ENCODE measurements at regions of chr1 and their contacts with region 1.

Region 1: GRCh38 chr1:7646981-7647901 is 123.9 kb upstream of the VAMP3 start:
- DNase-seq: peak; percentile 54 to 82 (median 62)
- ATAC-seq: peak in 1 of 4 donors; percentile 29
- H3K4me3 ChIP-seq: no peak overlapping the region
- H3K27ac ChIP-seq: no peak overlapping the region
- H3K4me1 ChIP-seq: peaks cover 0 to 27% (median 8%) of the 10 kb centered on the region in 12 donors
- H3K27me3 ChIP-seq: peaks cover 0 to 3% (median 0%) of the 10 kb centered on the region in 9 donors
- CTCF ChIP-seq: peak; percentile 85 to 98 (median 94)
- POLR2A ChIP-seq: no peak

Region 2: DNA sequence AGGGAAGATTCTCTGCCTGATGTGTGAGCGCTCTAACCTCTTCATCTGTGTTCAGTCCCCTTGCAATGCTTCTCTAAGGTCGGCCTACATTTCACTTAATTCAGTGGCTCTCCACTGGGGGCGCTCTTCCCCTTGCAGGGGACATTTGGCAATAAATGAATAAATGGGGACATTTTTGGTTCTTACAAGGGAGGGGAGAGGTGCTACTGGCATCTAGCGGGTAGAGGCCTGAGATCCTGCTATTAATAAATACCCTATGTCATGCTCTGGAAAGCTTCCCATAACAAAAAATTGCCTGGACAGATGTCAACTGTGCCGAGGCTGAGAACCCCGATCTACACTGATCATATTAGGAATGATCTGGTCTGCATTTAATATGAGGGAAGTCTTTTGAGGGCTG is 919.7 kb before region 1 on chr1:
- intact Hi-C with region 1: loop called in 7 of 10 experiments (anchors 5 to 10 kb)
- DNase-seq: peak in 4 of 5 donors; percentile 38 to 58 (median 43)
- ATAC-seq: peak in 3 of 4 donors; percentile 48 to 64 (median 54)
- H3K4me3 ChIP-seq: no peak overlapping the region
- H3K27ac ChIP-seq: no peak overlapping the region
- H3K4me1 ChIP-seq: peaks cover 0 to 9% (median 0%) of the 10 kb centered on the region in 12 donors
- H3K27me3 ChIP-seq: no peaks in the 10 kb centered on the region
- CTCF ChIP-seq: peak; percentile 68 to 89 (median 86)
- POLR2A ChIP-seq: no peak

Region 3: DNA sequence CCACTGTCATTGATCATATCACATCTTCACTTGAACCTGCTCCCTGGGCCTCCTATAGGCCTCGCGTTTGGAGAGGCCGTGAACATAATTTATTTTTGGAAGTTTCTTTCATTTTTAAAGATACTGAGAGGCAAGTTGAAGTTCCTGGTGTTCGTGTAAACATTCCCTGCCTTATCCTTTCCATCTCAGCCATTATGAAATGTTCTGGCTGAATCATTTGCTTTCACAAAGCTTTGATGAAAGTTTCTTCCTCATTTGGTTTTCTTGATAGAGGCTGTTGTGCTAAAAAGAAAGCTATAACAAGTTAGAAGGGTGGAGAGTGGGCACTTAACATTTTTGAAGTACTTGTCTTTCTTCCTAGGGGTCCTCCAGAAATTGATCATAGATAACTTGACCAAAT is 846.5 kb before region 1 on chr1:
- intact Hi-C with region 1: loop called in 3 of 10 experiments (anchors 10 kb)
- DNase-seq: no peak
- ATAC-seq: no peak
- H3K4me3 ChIP-seq: no peak overlapping the region
- H3K27ac ChIP-seq: peak overlapping the region in 11 of 12 donors; percentile 19 to 71 (median 53)
- H3K4me1 ChIP-seq: peaks cover 6 to 73% (median 53%) of the 10 kb centered on the region in 12 donors
- H3K27me3 ChIP-seq: no peaks in the 10 kb centered on the region
- CTCF ChIP-seq: no peak
- POLR2A ChIP-seq: no peak

Region 4: DNA sequence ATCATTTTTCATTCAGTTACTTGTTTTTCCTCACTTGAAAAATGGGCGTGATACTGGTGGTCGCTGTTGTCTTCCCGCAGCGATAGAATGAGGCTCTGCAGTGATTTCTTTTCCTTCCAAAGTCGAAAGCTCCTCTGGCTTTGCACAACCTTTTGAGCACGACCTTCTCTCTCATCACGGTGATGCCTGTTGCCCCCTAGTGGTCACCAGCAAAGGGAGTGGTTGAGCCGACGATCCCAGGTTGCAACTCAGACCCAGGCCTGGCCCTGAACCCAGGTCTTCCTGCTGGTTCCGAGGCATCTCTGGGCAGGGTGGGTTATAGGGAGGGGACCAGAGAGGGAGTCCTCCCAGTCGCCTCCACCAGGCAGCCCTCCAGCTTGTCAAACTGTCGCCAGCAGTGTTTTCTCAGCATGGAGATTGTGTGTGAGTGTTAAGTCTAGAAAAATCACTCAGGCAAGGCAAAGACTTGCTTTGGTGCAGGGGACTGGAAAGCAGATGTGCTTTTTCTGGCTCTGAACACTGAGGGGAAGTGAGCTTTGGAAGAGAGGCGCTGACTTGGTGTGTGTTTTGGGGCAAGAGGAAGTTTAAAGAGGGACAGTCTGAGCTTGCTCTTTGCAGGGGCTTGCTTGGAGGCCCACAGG is 576.7 kb before region 1 on chr1:
- intact Hi-C with region 1: loop called in 2 of 10 experiments (anchors 10 kb)
- DNase-seq: peak in 4 of 5 donors; percentile 55 to 64 (median 62)
- ATAC-seq: peak in 3 of 4 donors; percentile 74 to 90 (median 78)
- H3K4me3 ChIP-seq: peak overlapping the region in 11 of 12 donors; percentile 7 to 54 (median 33)
- H3K27ac ChIP-seq: no peak overlapping the region
- H3K4me1 ChIP-seq: peaks cover 0 to 7% (median 5%) of the 10 kb centered on the region in 12 donors
- H3K27me3 ChIP-seq: peaks cover 0 to 5% (median 0%) of the 10 kb centered on the region in 9 donors
- CTCF ChIP-seq: peak; percentile 68 to 90 (median 80)
- POLR2A ChIP-seq: no peak

Region 5: DNA sequence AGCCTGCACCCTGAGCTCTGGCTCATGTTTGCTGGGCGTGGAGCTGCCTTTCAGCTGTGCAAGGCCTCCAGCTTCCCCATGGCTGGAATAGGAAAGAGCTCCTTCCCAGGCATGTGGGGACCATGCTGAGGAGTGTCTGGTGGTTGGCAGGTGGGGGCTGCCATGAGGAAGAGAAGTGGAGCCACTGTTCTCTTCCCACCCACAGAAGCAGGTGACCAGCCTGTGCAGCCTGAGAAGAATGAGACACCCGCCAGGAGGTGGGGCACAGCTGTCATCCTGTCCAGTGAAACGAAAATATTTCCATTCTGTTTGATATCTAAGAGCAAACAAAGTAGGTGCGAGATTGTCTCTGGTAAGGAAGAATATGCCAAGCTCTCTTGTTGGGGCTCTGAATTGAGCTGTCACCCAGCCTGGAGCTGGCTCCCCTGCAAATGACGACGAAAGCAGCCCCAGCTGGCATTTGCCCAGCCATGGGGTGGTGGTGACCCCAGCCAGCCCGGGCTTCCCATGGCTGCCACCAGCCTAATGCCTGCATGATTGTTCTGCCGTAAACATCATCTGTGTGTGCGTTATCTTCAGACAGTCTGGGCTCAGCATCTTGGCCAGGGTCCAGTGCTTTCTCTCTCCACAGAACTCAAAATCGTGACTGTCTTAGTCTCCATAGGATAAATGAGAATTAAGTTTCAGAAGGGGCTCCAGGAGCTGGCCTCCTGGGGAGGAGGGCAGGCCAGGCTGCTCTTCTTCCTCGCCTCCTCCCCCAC is 305.9 kb before region 1 on chr1:
- intact Hi-C with region 1: loop called in 1 of 10 experiments (anchors 5 kb)
- DNase-seq: peak in 3 of 5 donors; percentile 18 to 33 (median 27)
- ATAC-seq: peak; percentile 61 to 86 (median 66)
- H3K4me3 ChIP-seq: no peak overlapping the region
- H3K27ac ChIP-seq: peak overlapping the region in 2 of 12 donors; percentile 30 to 42
- H3K4me1 ChIP-seq: peaks cover 0 to 17% (median 7%) of the 10 kb centered on the region in 12 donors
- H3K27me3 ChIP-seq: no peaks in the 10 kb centered on the region
- CTCF ChIP-seq: peak in 1 of 12 donors; percentile 12
- POLR2A ChIP-seq: no peak

Region 6: DNA sequence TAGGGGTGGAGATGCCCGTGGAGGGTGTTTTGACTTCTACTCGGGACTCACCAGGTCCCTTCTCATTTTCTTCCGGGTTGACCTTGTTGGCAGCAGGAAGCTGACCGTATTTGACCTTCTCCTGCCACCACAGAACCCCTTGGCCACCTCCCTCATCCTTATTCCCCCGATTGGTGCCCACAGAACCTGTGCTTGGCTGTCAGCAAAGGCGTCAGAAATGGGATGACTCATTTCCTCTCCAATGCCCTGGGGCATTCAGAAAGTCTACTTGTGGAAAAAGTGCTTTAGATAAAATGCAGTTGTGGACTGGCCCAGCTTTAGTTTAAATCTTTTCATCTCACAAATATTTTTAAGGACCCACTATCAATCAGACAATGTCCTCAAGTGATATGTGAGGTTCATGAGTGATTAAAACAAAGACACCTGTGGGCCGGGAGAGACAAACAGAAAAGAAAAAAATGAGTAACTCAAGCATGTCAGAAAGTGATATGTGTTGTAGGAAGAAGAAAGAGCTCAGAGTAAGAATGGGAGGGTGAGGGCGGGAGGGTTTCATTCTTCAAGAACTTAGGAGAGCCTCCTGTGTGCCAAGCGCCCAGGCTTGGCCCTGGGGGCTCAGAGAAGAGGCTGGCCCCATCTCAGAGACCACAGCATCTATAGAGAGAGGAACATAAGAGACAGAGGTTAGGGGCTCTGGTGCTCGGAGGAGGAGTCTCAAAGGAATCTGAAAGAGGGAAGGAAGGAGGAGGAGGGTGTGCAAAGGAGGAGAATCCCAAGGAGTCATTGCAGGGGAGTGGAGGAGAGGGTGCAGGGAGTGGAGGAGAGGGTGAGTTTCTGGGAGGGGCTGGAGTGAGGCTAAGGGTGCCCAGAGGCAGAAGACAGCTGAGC is 97.7 kb before region 1 on chr1:
- intact Hi-C with region 1: loop called in 1 of 10 experiments (anchors 10 kb)
- DNase-seq: peak in 2 of 5 donors; percentile 13 to 28
- ATAC-seq: peak in 2 of 4 donors; percentile 33 to 55
- H3K4me3 ChIP-seq: no peak overlapping the region
- H3K27ac ChIP-seq: peak overlapping the region in 1 of 12 donors; percentile 1
- H3K4me1 ChIP-seq: peaks cover 0 to 41% (median 12%) of the 10 kb centered on the region in 12 donors
- H3K27me3 ChIP-seq: no peaks in the 10 kb centered on the region
- CTCF ChIP-seq: no peak
- POLR2A ChIP-seq: no peak

Region 7: GRCh38 chr1:7608628-7609295 is 38.5 kb before region 1 on chr1:
- intact Hi-C with region 1: no loop called
- DNase-seq: no peak
- ATAC-seq: no peak
- H3K4me3 ChIP-seq: no peak overlapping the region
- H3K27ac ChIP-seq: no peak overlapping the region
- H3K4me1 ChIP-seq: peaks cover 0 to 4% (median 0%) of the 10 kb centered on the region in 12 donors
- H3K27me3 ChIP-seq: no peaks in the 10 kb centered on the region
- CTCF ChIP-seq: no peak
- POLR2A ChIP-seq: no peak

Region 8: GRCh38 chr1:7690496-7691182 is 43.4 kb after region 1 on chr1:
- intact Hi-C with region 1: no loop called
- DNase-seq: peak in 1 of 5 donors; percentile 6
- ATAC-seq: no peak
- H3K4me3 ChIP-seq: no peak overlapping the region
- H3K27ac ChIP-seq: no peak overlapping the region
- H3K4me1 ChIP-seq: peaks cover 0 to 7% (median 0%) of the 10 kb centered on the region in 12 donors
- H3K27me3 ChIP-seq: peaks cover 0 to 6% (median 0%) of the 10 kb centered on the region in 9 donors
- CTCF ChIP-seq: no peak
- POLR2A ChIP-seq: no peak

Measured in heart left ventricle (tissue), 16 donors.